Activated B cell treated with CpG ODN at 0.5 μM for 24 hours (primary cell): ENCODE measurements at regions of chr16 and their contacts with region 1.

Region 1: DNA sequence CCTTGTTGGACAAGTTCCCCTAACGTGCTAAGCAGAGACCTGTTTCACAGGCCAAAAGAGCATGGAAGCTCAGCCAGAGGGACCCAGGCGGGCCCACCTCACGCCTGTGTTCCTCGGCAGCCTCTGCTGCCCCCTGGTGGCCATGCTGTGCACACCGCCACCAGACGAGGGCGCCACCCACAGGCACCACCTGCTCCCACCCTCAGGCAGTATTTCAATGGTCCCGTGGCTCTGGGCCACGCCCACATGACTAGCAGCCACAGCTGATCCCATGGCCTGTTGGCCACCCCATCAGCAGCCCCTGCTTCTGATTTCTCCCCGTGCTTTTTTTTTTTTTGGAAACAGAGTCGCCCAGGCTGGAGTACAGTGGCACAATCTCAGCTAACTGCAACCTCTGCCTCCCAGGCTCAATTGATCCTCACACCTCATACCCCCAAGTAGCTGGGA is 18.9 kb downstream of the MPG start:
- DNase-seq: peak; percentile 89
- ATAC-seq: peak; percentile 99
- H3K4me3 Mint-ChIP-seq: no peak overlapping the region
- H3K27ac Mint-ChIP-seq: no peak overlapping the region
- H3K4me1 Mint-ChIP-seq: peaks cover 6% of the 10 kb centered on the region
- H3K27me3 Mint-ChIP-seq: no peaks in the 10 kb centered on the region
- CTCF ChIP-seq: peak; percentile 70

Region 2: DNA sequence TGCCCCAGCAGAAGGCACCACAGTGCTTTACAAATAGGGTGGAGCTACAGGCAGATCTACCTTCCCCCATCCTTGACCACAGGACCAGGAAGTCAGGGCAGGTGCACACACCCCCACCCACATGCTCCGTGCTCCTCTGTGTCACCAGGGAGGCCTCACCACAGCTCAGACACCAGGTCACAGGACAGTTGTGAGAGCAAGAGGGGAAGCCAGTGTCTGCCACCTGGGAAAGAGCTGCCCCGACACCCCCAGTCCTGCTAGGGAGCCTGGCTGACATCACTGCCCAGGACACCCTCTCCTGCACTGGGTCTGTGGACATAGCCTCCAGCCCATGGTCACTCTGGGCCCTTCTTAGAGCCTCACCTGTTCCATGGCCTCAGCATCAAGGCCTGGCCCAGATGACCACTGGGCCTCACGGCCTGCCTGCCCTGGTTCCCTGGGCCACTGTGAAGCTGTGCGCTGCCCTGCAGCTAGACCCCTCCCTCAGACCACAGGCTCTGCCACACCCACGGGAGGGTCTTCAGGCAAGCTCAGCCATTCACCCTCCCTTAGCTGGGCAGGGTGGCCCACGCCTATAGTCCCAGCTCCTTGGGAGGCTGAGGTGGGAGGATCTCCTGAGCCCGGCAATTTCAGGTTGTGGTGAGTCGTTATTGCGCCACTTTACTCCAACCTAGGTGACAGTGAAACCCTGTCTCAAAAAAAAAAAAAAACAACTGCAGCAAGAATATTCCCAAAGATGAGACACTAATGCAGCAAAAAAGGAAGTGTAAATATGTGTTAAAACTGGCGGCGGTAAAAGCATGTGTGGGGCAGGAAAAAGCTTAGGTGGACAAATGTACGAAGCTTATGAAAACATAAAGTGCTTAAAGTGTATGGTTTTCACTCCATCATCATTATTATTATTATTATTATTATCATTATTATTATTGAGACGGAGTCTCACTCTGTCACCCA is 57.7 kb before region 1 on chr16:
- CTCF ChIA-PET with region 1: interaction called, 12 read pairs
- POLR2A ChIA-PET with region 1: interaction called, 4 read pairs
- intact Hi-C with region 1: no loop called
- DNase-seq: peak; percentile 61
- ATAC-seq: peak; percentile 86
- H3K4me3 Mint-ChIP-seq: peak overlapping the region; percentile 57
- H3K27ac Mint-ChIP-seq: peak overlapping the region; percentile 95
- H3K4me1 Mint-ChIP-seq: peaks cover 65% of the 10 kb centered on the region
- H3K27me3 Mint-ChIP-seq: no peaks in the 10 kb centered on the region
- CTCF ChIP-seq: no peak

Region 3: DNA sequence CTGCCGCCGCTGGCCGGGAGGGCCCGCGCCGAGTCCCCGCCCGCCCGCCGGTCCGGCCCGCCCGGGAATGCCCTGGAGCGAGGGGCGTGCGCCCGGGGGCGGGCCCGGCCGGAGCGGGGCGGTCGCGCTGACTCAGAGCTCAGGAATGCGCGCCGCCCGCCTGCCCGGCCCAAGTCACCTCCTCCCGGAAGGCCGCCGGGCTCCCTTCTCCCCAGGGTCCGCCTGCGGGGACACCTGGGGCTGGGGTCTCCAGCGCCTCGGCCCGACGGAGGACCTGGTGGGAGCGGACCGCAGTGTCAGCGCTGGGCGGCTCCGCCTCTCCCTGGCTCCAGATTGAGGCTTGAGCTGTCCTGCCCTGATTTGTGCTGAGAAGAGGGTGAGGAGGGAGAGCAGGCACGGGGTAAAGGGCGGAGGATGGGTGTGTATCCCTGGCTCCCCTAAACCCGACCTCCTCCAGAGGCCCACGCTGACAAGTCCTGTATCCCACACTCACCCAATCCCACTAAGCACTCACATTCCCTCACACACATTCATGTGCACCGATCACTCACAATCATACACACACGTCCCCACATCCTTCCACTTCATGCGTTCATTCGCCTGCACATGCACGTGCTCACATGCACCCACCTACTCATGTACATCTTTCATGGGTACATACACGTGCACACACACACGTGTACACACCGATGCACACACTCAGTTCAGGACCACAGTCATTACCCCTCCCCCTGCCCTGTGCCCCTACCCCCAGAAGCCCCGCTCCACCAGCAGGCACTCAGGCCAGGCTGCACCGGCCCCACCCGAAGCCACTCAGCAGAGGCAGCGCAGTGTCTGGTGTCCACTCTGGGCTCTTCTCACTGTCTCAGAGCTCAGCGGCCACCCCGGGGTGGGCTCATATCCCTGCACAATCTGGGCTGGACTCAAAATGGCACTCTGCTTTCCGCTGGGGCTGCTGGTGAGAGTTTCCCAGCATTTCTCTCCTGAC is 24.1 kb before region 1 on chr16 and contains the start of gene RHBDF1:
- CTCF ChIA-PET with region 1: interaction called, 218 read pairs
- POLR2A ChIA-PET with region 1: interaction called, 11 read pairs
- intact Hi-C with region 1: no loop called
- DNase-seq: no peak
- ATAC-seq: peak; percentile 63
- H3K4me3 Mint-ChIP-seq: peak within 1 kb of the TSS; percentile 60
- H3K27ac Mint-ChIP-seq: no peak within 1 kb of the TSS
- H3K4me1 Mint-ChIP-seq: peaks cover 25% of the 10 kb centered on the region
- H3K27me3 Mint-ChIP-seq: peaks cover 20% of the 10 kb centered on the region
- CTCF ChIP-seq: no peak
- total RNA-seq, gene RHBDF1: 0.67 and 1.3 TPM in 2 replicates

Region 4: DNA sequence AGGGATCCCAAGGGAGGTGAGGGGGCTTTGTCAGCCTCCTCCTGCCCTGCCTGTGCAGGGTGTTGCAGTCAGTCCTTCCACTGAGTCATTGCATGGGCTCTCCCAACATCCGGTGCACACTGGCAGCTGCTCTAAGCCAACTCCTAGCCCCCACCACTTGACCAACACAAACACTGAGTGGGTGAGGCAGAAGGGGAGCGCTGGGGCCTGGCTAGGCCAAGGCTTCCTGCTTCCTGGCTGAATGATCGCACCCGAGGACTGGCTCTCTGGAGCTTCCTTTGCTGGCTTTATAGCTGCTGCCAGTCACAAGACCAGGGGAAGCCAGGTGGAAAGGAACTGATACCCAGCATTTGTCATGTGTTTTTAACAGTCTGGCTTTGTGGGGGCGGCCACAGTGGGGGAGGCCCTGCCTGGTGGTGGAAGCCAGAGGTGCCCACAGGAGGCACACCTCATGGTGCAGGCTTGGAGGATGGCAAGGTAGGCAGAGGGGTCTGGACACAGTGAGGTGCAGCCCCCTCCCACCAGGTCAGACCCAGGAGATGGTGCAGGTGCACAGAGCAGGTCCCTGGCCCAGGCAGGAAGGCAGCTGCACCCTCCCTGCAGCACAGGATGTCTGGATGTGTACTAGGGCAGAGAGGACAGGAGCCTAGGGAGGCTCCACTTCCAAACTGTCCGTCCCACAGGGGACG is 12.1 kb before region 1 on chr16:
- CTCF ChIA-PET with region 1: interaction called, 22 read pairs
- POLR2A ChIA-PET with region 1: interaction called, 5 read pairs
- intact Hi-C with region 1: loop called (anchors 1 kb)
- DNase-seq: peak; percentile 63
- ATAC-seq: peak; percentile 84
- H3K4me3 Mint-ChIP-seq: peak overlapping the region; percentile 58
- H3K27ac Mint-ChIP-seq: peak overlapping the region; percentile 91
- H3K4me1 Mint-ChIP-seq: peaks cover 36% of the 10 kb centered on the region
- H3K27me3 Mint-ChIP-seq: no peaks in the 10 kb centered on the region
- CTCF ChIP-seq: no peak

Region 5: GRCh38 chr16:180938-181667 is 84.1 kb after region 1 on chr16:
- CTCF ChIA-PET with region 1: no interaction called
- POLR2A ChIA-PET with region 1: no interaction called
- intact Hi-C with region 1: no loop called
- DNase-seq: peak; percentile 79
- ATAC-seq: peak; percentile 83
- H3K4me3 Mint-ChIP-seq: peak overlapping the region; percentile 19
- H3K27ac Mint-ChIP-seq: no peak overlapping the region
- H3K4me1 Mint-ChIP-seq: peaks cover 10% of the 10 kb centered on the region
- H3K27me3 Mint-ChIP-seq: peaks cover 11% of the 10 kb centered on the region
- CTCF ChIP-seq: peak; percentile 84